ENCODE measurements at regions of chr1 and their contacts with region 1.

Region 1: DNA sequence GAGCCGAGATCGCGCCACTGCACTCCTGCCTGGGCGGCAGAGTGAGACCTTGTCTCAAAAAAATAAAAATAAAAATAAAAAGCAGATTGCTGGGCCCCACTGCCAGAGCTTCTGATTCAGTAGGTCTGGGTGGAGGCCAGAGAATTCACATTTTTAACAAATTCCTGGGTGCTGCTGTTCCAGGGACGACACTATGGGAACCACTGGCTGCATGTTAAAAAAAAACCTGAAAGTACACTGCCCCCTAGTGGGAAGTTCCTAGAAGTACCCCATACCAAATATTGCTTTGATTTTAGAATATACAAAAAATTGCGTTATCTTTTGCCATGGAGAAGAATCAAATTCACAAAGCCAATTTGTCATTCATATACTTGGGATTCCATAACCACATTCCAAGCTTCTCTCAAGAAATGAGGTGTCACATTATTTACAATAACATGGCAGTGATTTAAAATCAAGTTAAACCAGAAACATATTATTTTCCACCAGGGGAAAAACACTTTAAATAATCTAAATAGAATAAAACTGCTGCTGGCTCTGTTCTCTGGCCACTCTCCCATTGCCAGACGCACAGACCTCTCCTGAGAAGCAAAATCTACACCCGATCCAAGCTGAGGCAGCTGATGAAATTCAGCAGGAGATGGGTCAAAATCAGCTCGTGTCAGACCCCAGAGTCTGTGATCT is 27.4 kb downstream of the SYF2 start:
- DNase-seq: peak in 1 of 2 donors; percentile 77
- H3K4me3 ChIP-seq: no peak overlapping the region
- H3K27ac ChIP-seq: no peak overlapping the region
- H3K4me1 ChIP-seq: no peaks in the 10 kb centered on the region
- H3K27me3 ChIP-seq: peaks cover 0 to 2% (median 0%) of the 10 kb centered on the region in 3 donors
- CTCF ChIP-seq: peak in 5 of 7 experiments; percentile 62 to 84 (median 77)
- EP300 ChIP-seq: no peak
- POLR2A ChIP-seq: no peak

Region 2: GRCh38 chr1:24861821-24862727 is 342.9 kb before region 1 on chr1:
- intact Hi-C with region 1: loop called (anchors 10 kb)
- DNase-seq: peak; percentile 26 to 56
- H3K4me3 ChIP-seq: no peak overlapping the region
- H3K27ac ChIP-seq: no peak overlapping the region
- H3K4me1 ChIP-seq: peaks cover 0 to 15% (median 10%) of the 10 kb centered on the region in 4 donors
- H3K27me3 ChIP-seq: peaks cover 1 to 80% (median 3%) of the 10 kb centered on the region in 3 donors
- CTCF ChIP-seq: no peak
- EP300 ChIP-seq: no peak
- POLR2A ChIP-seq: no peak

Region 3: GRCh38 chr1:24930204-24931145 is 274.5 kb before region 1 on chr1 and contains the start of gene RUNX3:
- intact Hi-C with region 1: loop called (anchors 10 kb)
- DNase-seq: peak; percentile 64 to 85
- H3K4me3 ChIP-seq: peak within 1 kb of the TSS; percentile 27 to 53 (median 44)
- H3K27ac ChIP-seq: peak within 1 kb of the TSS; percentile 69 to 82 (median 73)
- H3K4me1 ChIP-seq: peaks cover 34 to 70% (median 52%) of the 10 kb centered on the region in 4 donors
- H3K27me3 ChIP-seq: peaks cover 40 to 99% (median 90%) of the 10 kb centered on the region in 3 donors
- CTCF ChIP-seq: no peak
- EP300 ChIP-seq: no peak
- POLR2A ChIP-seq: no peak
- total RNA-seq, gene RUNX3: 0.29 to 6.1 (median 3.2) TPM in 4 of 5 donors, not detected in the other

Measured in stomach (tissue), 19 donors.